ENCODE measurements at regions of chr20 and their contacts with region 1.

Region 1: GRCh38 chr20:51372176-51372803 is 170.2 kb downstream of the NFATC2 start:
- DNase-seq: peak; percentile 69 to 70
- H3K4me3 ChIP-seq: no peak overlapping the region
- H3K27ac ChIP-seq: no peak overlapping the region
- H3K4me1 ChIP-seq: no peaks in the 10 kb centered on the region
- H3K27me3 ChIP-seq: no peaks in the 10 kb centered on the region
- CTCF ChIP-seq: peak; percentile 78 to 86 (median 84)
- POLR2A ChIP-seq: no peak

Region 2: GRCh38 chr20:51447097-51447771 is 74.9 kb after region 1 on chr20:
- intact Hi-C with region 1: no loop called
- DNase-seq: peak; percentile 91 to 93
- H3K4me3 ChIP-seq: no peak overlapping the region
- H3K27ac ChIP-seq: peak overlapping the region; percentile 64 to 67
- H3K4me1 ChIP-seq: peaks cover 15 to 29% of the 10 kb centered on the region in 2 donors
- H3K27me3 ChIP-seq: no peaks in the 10 kb centered on the region
- CTCF ChIP-seq: peak in 1 of 4 experiments; percentile 24
- POLR2A ChIP-seq: no peak

Region 3: DNA sequence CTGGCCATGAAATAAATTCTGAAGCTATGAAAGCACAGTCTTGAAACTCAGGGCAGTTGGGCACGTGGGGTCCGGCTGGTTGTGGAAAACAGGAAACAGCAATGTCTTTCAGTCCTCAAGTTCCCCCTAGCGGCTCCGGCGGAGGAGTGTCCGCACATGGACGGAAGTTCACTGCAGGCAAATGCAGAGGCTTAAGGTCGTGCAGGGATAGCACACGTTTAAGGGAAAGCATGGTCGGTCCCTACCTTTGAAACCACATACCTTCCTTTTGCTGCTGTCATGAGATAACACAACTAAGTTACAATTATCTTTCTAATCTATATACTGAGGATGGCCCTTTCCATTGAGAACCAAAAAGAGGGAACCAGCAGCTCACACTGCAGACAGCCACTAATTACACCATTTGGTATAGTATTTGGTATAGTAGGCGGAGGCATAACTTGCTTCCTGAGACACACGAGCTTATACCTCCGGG is 222.8 kb after region 1 on chr20:
- intact Hi-C with region 1: loop called (anchors 10 kb)
- DNase-seq: peak; percentile 85 to 93
- H3K4me3 ChIP-seq: no peak overlapping the region
- H3K27ac ChIP-seq: peak overlapping the region; percentile 71 to 85
- H3K4me1 ChIP-seq: no peaks in the 10 kb centered on the region
- H3K27me3 ChIP-seq: no peaks in the 10 kb centered on the region
- CTCF ChIP-seq: peak; percentile 90 to 93 (median 92)
- POLR2A ChIP-seq: no peak

Measured in uterus (tissue), 4 donors.